ENCODE measurements at regions of chr11 and their contacts with region 1.

Region 1: GRCh38 chr11:14537134-14537599 is 17.0 kb upstream of the PSMA1 start:
- DNase-seq: peak in 1 of 5 donors; percentile 22
- H3K4me3 ChIP-seq: no peak overlapping the region
- H3K27ac ChIP-seq: no peak overlapping the region
- H3K4me1 ChIP-seq: peaks cover 2% of the 10 kb centered on the region
- H3K27me3 ChIP-seq: no peaks in the 10 kb centered on the region
- CTCF ChIP-seq: peak in 2 of 3 donors; percentile 44 to 46
- EP300 ChIP-seq: no peak
- POLR2A ChIP-seq: no peak

Region 2: DNA sequence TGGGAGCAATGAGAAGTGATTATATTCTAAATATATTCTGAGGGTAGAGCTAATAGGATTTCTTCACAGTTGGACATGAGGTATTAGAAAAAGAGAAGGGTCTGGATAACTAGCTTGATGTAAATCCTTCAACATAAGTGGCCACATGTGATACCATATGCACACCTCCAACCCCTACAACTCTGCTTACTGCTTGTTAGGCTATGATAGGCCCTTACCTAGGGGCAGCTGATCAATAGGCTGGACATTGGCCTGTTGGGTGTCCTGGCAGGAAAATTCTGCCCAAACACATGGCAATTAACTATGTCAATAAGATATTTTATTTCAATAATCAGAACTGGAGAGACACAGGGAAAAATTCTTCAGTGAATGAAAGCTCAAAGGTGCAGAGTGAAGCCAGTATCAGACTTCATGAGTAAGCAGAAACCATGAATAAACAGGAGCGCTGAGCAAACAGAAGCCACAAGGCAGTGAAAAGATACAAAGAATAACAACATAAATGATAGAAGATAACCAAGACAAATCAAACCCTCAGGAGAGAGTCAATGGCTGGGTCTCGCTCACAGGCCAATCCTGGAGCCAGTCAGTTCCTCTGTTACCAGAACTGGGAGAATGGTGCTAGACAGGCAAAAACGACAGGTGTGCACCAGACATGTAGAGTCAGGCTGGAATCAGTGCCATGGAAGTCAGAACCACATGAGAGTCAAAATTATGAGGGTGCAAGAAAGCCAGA is 29.3 kb after region 1 on chr11:
- intact Hi-C with region 1: no loop called
- DNase-seq: no peak
- H3K4me3 ChIP-seq: no peak overlapping the region
- H3K27ac ChIP-seq: no peak overlapping the region
- H3K4me1 ChIP-seq: no peaks in the 10 kb centered on the region
- H3K27me3 ChIP-seq: no peaks in the 10 kb centered on the region
- CTCF ChIP-seq: no peak
- EP300 ChIP-seq: no peak
- POLR2A ChIP-seq: no peak

Region 3: DNA sequence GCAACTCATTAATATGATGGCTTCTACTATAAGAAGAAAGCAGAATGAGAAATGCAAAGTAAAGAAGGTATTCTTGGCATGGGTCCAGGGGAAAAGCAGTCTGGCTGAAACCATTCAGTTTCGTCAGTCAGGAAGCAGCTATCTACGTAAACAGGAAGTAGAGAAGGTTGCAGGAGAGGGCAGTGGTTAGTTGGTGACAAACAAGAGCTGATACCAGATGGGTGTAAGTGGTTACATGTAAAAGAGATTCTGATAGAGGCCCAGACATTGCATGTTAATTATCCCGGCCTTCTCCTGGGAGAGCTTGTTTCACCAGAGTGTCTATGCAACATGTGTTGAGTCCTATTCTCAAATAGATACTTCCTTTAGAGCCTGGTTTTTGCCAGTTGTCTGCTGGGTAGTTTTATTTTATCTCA is 41.4 kb after region 1 on chr11:
- intact Hi-C with region 1: no loop called
- DNase-seq: no peak
- H3K4me3 ChIP-seq: no peak overlapping the region
- H3K27ac ChIP-seq: no peak overlapping the region
- H3K4me1 ChIP-seq: no peaks in the 10 kb centered on the region
- H3K27me3 ChIP-seq: no peaks in the 10 kb centered on the region
- CTCF ChIP-seq: no peak
- EP300 ChIP-seq: no peak
- POLR2A ChIP-seq: no peak

Region 4: DNA sequence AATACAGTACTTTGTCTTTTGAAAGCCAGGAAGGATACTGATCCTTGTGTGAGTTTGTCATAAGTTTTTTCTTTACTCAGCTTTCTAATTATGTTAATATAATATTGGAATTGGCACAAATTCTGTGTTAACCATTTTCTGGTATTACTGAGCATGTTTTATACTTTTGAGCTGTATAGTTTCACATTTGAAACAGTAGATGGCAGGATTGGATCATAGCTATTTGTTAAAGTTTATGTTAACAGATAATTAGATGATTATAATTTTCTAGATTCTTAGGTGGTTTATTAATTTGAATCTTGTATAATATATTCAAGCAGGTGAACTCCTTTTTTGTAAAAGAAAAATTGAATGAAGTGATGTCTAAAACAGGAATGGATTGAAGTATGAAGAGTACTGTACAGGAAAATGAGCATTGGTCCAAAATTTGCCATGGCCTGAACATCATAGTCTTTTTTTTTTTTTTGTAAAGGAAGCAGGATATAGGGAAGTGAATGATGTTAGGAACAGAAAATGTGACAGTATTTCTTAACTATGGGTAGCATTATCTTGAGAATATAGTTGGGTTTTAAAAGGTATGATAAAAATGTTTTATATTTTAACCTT is 252.8 kb after region 1 on chr11:
- intact Hi-C with region 1: no loop called
- DNase-seq: no peak
- H3K4me3 ChIP-seq: no peak overlapping the region
- H3K27ac ChIP-seq: no peak overlapping the region
- H3K4me1 ChIP-seq: no peaks in the 10 kb centered on the region
- H3K27me3 ChIP-seq: no peaks in the 10 kb centered on the region
- CTCF ChIP-seq: no peak
- EP300 ChIP-seq: no peak
- POLR2A ChIP-seq: no peak

Region 5: GRCh38 chr11:14907411-14908213 is 370.4 kb after region 1 on chr11:
- intact Hi-C with region 1: loop called in 1 of 4 experiments (anchors 10 kb)
- DNase-seq: peak; percentile 34 to 72 (median 56)
- H3K4me3 ChIP-seq: no peak overlapping the region
- H3K27ac ChIP-seq: no peak overlapping the region
- H3K4me1 ChIP-seq: peaks cover 1% of the 10 kb centered on the region
- H3K27me3 ChIP-seq: no peaks in the 10 kb centered on the region
- CTCF ChIP-seq: peak in 1 of 3 donors; percentile 20
- EP300 ChIP-seq: no peak
- POLR2A ChIP-seq: no peak